Activated T-helper 2 cell treated with anti-CD3 and anti-CD28 coated beads, Interferon-gamma antibody, Interleukin-2, Interleukin-4, amounts not matched to agents 10 μg/mL and 5 μg/mL and 100 μg/mL, durations not matched to agents 14 hours and 24 hours and 36 hours (primary cell): ENCODE measurements at regions of chr1 and their contacts with region 1.

Region 1: GRCh38 chr1:218330043-218330623 is 15.0 kb upstream of the TGFB2 start:
- DNase-seq: no peak
- H3K4me3 Mint-ChIP-seq: no peak overlapping the region
- H3K27ac Mint-ChIP-seq: no peak overlapping the region
- H3K4me1 Mint-ChIP-seq: no peaks in the 10 kb centered on the region
- H3K27me3 Mint-ChIP-seq: no peaks in the 10 kb centered on the region

Region 2: DNA sequence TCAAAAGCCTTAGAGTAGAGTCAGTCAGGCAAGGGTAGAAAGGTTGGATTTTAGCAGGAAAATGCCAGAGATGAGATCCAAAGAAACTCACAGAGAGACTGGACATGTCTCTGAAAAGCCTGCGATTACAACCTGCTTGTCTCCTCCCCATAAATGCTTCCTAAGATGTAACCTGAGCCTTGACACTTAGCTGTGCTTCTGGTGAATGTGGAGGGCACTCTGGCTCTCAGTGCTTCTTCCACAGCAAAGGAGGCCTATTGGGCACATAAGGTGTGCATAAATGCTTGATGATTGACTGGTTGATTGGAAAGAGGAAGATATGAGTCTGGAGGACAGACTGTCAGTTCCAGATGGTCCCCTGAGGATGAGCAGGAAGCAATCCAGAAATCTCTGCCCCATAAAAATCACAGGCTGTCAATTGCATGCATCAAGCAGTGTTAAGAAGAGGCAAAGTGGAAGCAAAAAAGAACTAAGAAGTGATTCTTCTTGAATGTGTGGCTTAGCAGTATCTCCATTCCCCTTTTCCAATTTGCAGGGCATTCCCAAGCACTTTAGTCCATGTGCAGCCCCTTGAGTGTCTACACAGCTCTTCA is 281.2 kb before region 1 on chr1:
- intact Hi-C with region 1: no loop called
- DNase-seq: no peak
- H3K4me3 Mint-ChIP-seq: no peak overlapping the region
- H3K27ac Mint-ChIP-seq: no peak overlapping the region
- H3K4me1 Mint-ChIP-seq: no peaks in the 10 kb centered on the region
- H3K27me3 Mint-ChIP-seq: no peaks in the 10 kb centered on the region

Region 3: GRCh38 chr1:218284934-218285635 is 45.0 kb before region 1 on chr1 and contains the start of gene RRP15:
- intact Hi-C with region 1: loop called (anchors 5 kb)
- DNase-seq: peak; percentile 81
- H3K4me3 Mint-ChIP-seq: peak within 1 kb of the TSS; percentile 98
- H3K27ac Mint-ChIP-seq: peak within 1 kb of the TSS; percentile 94
- H3K4me1 Mint-ChIP-seq: peaks cover 18% of the 10 kb centered on the region
- H3K27me3 Mint-ChIP-seq: peaks cover 3% of the 10 kb centered on the region
- total RNA-seq, gene RRP15: 32.9 and 34.6 TPM in 2 replicates

Region 4: DNA sequence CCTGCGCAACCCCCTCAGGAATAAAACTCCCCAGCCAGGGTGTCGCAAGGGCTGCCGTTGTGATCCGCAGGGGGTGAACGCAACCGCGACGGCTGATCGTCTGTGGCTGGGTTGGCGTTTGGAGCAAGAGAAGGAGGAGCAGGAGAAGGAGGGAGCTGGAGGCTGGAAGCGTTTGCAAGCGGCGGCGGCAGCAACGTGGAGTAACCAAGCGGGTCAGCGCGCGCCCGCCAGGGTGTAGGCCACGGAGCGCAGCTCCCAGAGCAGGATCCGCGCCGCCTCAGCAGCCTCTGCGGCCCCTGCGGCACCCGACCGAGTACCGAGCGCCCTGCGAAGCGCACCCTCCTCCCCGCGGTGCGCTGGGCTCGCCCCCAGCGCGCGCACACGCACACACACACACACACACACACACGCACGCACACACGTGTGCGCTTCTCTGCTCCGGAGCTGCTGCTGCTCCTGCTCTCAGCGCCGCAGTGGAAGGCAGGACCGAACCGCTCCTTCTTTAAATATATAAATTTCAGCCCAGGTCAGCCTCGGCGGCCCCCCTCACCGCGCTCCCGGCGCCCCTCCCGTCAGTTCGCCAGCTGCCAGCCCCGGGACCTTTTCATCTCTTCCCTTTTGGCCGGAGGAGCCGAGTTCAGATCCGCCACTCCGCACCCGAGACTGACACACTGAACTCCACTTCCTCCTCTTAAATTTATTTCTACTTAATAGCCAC is 15.7 kb after region 1 on chr1:
- intact Hi-C with region 1: no loop called
- DNase-seq: no peak
- H3K4me3 Mint-ChIP-seq: peak overlapping the region; percentile 67
- H3K27ac Mint-ChIP-seq: no peak overlapping the region
- H3K4me1 Mint-ChIP-seq: peaks cover 16% of the 10 kb centered on the region
- H3K27me3 Mint-ChIP-seq: peaks cover 63% of the 10 kb centered on the region

Region 5: DNA sequence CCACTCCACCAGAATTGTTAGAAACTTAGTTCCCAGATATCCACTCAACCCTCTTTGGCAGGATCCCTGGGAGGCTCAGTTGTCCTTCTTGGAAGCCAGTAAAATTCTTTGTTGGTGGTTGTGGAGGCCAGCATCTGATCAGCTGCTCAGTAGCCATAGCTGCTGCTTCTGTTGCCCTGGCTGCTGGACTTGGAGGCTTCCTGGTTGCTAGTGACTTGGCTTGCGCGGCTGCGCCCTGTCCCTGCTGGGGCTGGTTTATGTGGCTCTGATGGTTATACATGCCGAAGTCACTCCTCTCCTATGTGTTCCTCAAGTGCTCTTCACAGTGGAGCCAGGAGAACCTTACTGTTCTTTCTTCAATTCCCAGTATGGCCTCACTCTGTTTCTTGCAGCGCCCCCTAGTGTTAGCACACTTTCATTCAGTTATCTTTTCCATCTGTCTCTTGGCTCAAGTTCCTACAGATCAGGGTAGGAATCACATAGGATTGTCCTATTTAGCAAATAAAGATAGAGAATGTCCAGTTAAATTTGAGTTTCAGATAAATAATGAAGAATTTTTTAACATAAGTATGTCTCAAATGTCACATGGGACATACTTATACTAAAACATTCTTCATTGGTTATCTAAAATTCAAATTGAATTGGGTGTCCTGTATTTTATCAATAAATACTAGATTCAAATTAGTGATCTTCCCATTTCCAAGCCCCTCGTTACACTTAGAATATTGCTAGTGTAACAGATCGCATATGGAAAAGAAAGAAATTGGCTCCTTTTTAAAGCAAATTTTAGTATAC is 191.4 kb after region 1 on chr1:
- intact Hi-C with region 1: loop called (anchors 1 kb)
- DNase-seq: no peak
- H3K4me3 Mint-ChIP-seq: no peak overlapping the region
- H3K27ac Mint-ChIP-seq: no peak overlapping the region
- H3K4me1 Mint-ChIP-seq: no peaks in the 10 kb centered on the region
- H3K27me3 Mint-ChIP-seq: peaks cover 15% of the 10 kb centered on the region

Region 6: GRCh38 chr1:219660666-219661463 is 1330.7 kb after region 1 on chr1:
- intact Hi-C with region 1: loop called (anchors 5 kb)
- DNase-seq: peak; percentile 31
- H3K4me3 Mint-ChIP-seq: peak overlapping the region; percentile 47
- H3K27ac Mint-ChIP-seq: no peak overlapping the region
- H3K4me1 Mint-ChIP-seq: peaks cover 9% of the 10 kb centered on the region
- H3K27me3 Mint-ChIP-seq: peaks cover 2% of the 10 kb centered on the region